Tibial artery (tissue), 4 donors: ENCODE measurements at regions of chr10 and their contacts with region 1.

Region 1: GRCh38 chr10:91800182-91800581 is 2.0 kb downstream of the TNKS2 start:
- DNase-seq: no peak
- H3K4me3 ChIP-seq: peak overlapping the region; percentile 90 to 93
- H3K27ac ChIP-seq: peak overlapping the region in 1 of 2 donors; percentile 99
- H3K4me1 ChIP-seq: peaks cover 0 to 53% (median 33%) of the 10 kb centered on the region in 4 donors
- H3K27me3 ChIP-seq: no peaks in the 10 kb centered on the region
- CTCF ChIP-seq: no peak

Region 2: GRCh38 chr10:91694170-91694794 is 105.9 kb before region 1 on chr10:
- intact Hi-C with region 1: loop called (anchors 5 kb)
- DNase-seq: no peak
- H3K4me3 ChIP-seq: no peak overlapping the region
- H3K27ac ChIP-seq: no peak overlapping the region
- H3K4me1 ChIP-seq: peaks cover 3 to 16% (median 11%) of the 10 kb centered on the region in 4 donors
- H3K27me3 ChIP-seq: no peaks in the 10 kb centered on the region
- CTCF ChIP-seq: peak; percentile 61 to 66

Region 3: GRCh38 chr10:91745074-91745832 is 54.9 kb before region 1 on chr10:
- intact Hi-C with region 1: no loop called
- DNase-seq: no peak
- H3K4me3 ChIP-seq: no peak overlapping the region
- H3K27ac ChIP-seq: no peak overlapping the region
- H3K4me1 ChIP-seq: peaks cover 0 to 16% (median 3%) of the 10 kb centered on the region in 4 donors
- H3K27me3 ChIP-seq: no peaks in the 10 kb centered on the region
- CTCF ChIP-seq: peak in 1 of 2 experiments; percentile 7